Ascending aorta (tissue), 2 donors: ENCODE measurements at regions of chrX and their contacts with region 1.

Region 1: DNA sequence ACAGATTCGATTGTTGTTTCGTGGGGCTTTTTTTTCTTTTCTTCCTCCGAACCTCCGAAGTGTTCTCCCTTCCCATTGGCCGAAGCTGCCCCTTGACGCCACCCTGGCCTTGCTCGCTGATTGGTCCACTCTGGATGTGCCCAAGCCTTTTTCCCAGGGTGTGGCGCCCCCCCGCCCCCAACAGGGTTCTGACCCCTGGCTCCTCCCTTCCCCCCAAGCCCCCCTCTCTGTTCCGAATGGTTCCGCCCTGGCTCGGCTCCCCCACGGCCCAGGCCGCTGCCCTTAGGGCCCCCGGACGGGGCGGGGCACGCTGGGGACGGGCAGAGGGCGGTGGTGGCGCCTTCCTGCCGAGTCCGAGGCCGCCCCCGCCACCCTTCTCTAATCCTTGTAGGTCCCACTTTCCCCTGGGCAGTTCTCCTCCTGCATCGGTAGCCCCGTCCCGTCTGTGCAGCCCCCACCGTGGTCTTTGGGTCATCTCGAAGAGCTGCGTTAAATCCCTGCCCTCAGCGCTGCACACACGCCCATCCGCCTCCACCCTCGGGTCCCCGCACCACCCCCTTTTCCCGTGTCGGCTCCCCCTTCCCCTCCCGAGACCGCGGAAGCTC is 25.5 kb downstream of the UTP14A start:
- DNase-seq: peak; percentile 60 to 94
- H3K4me3 ChIP-seq: peak overlapping the region; percentile 43 to 76
- H3K27ac ChIP-seq: peak overlapping the region; percentile 83 to 86
- H3K4me1 ChIP-seq: no peaks in the 10 kb centered on the region
- H3K27me3 ChIP-seq: no peaks in the 10 kb centered on the region
- CTCF ChIP-seq: no peak

Region 2: GRCh38 chrX:129953881-129954280 is 22.4 kb after region 1 on chrX:
- intact Hi-C with region 1: loop called (anchors 2 kb)
- DNase-seq: no peak
- H3K4me3 ChIP-seq: no peak overlapping the region
- H3K27ac ChIP-seq: no peak overlapping the region
- H3K4me1 ChIP-seq: no peaks in the 10 kb centered on the region
- H3K27me3 ChIP-seq: no peaks in the 10 kb centered on the region
- CTCF ChIP-seq: no peak

Region 3: DNA sequence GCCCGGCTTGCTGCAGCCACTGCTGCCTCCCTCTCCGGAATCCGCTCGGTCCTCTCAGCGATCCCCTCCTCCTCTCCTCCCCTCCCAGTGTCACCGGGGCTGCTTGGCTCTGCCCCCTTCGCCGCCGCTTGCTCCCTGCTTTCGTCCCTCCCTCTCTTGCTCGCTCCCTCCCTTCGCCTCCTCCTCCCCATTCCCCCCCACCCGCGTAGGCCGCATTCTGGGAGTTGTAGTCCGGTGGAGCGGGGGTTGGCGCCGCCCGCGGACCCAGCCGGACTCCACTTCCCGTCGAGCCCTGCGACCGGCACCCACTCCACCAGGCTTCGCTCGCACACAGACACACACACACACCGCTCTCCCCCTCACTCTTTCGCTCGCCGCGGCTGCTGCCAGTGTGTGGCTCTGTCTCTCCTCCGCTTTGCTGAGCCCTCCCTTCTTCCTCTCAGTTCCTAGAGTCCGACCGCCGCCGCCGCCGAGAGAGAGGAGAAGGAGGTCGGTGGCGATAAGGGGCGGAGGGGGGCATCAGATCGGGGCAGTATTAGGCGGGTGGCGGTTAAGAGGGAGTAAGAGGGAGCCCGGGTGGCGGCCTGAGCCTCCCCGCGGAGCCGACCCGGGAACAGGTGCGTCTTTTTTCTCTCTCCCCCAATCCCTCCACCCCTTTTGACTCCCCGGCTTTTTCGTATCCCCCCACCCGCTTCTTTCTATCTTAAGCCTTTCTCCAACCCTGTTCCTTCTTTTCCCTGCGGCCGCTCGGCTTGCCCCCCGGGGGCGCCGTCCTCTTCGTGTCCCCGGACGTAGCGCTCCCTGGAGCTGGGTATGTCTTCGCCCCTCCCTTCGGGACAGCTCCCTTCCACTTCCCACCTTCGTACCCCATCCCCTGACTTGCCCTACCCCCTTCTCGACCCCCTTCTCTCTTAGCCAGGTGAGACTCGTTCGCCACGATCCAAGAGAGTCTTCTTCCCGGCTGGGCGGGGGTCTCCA is 51.0 kb after region 1 on chrX and contains the start of gene BCORL1:
- intact Hi-C with region 1: loop called (anchors 1 kb)
- DNase-seq: peak; percentile 75 to 94
- H3K4me3 ChIP-seq: peak within 1 kb of the TSS in 1 of 2 donors; percentile 58
- H3K27ac ChIP-seq: no peak within 1 kb of the TSS
- H3K4me1 ChIP-seq: no peaks in the 10 kb centered on the region
- H3K27me3 ChIP-seq: no peaks in the 10 kb centered on the region
- CTCF ChIP-seq: no peak
- total RNA-seq, gene BCORL1: 10.3 TPM

Region 4: GRCh38 chrX:130165703-130166502 is 234.4 kb after region 1 on chrX and contains the start of gene AIFM1:
- intact Hi-C with region 1: loop called (anchors 5 kb)
- DNase-seq: peak; percentile 70 to 94
- H3K4me3 ChIP-seq: peak within 1 kb of the TSS; percentile 49 to 76
- H3K27ac ChIP-seq: peak within 1 kb of the TSS; percentile 62 to 82
- H3K4me1 ChIP-seq: no peaks in the 10 kb centered on the region
- H3K27me3 ChIP-seq: no peaks in the 10 kb centered on the region
- CTCF ChIP-seq: no peak
- total RNA-seq, gene AIFM1: 0.75 TPM

Region 5: DNA sequence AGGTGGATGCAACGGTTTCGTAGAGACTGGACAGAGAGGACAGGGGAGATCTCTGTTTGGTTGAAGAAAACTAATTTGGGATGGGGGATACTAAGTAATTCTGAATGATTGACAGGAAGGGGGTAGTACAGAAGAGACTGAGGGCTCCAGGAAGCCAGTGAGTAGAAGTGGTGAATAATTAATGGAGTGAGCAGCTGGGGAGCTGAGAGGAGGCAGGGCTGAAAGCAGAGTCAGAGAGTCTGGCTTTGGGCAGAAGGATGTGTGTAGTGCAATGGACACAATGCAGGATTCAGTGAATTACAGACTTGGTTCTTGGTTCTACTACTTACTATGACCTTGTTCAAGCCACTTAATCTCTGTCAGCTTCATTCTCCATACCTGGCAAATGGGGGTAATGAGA is 632.0 kb after region 1 on chrX:
- intact Hi-C with region 1: no loop called
- DNase-seq: no peak
- H3K4me3 ChIP-seq: no peak overlapping the region
- H3K27ac ChIP-seq: no peak overlapping the region
- H3K4me1 ChIP-seq: no peaks in the 10 kb centered on the region
- H3K27me3 ChIP-seq: no peaks in the 10 kb centered on the region
- CTCF ChIP-seq: no peak